AG04449 (cell line): ENCODE measurements at regions of chr9 and their contacts with region 1.

Region 1: DNA sequence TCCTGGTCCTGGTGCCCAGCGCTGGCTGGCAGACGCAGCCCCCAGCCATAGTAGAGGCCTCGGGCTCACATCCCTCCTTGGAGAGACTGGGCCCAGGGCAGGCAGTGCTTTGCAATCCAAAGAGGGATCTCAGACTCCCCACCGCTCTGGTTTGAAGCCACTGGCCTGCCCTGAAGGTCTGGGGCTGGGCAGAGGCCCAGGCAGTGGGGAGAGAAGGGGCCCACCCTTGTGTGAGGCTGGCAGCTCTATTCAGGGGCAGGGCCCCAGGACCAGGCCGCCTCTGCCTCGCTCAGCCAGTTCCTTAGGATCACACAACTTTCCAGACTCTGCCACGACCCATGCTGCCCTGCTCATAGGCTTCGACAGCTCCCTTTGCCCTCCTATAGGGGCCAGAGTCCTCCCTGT is 10.7 kb upstream of the SEC16A start:
- DNase-seq: no peak
- H3K4me3 ChIP-seq: no peak overlapping the region
- CTCF ChIP-seq: no peak

Region 2: DNA sequence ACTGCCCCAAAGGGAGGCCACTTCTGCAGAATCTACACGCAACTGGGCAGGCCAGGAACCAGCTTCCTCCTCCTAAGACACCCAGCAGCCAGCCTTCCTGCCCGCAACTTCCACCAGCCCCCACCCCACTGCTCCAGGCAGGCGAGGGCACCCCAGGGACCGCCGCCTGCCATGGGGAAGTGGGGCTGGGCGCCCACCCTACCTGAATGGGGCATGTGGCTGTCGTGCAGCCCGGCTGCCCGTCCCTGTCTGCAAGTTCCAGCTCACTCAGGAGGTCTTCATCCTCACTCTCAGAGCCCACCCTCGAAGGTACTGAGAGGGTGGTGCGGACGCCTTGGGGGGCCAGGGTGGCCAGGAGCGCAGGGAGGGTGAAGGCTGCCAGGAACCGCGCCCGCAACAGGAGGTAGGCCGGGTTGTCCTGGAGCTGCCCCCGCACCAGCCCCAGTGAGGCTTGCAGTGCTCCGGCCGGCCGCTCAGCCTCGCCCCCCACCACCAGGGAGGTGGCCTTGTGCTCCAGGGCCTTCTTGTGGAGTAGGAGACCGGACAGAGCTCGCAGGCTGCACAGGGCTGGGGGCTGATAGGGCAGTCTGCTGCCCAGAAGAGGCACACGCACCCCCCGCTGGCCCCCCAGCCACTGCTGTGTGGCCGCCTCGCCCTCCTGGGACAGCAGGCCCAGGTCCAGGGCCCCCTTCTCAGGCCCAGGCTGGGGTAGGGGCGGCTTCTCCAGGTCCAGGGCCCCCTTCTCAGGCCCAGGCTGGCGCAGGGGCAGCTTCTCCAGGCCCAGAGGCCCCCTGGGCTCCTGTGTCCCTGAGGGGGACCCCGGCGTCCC is 116.0 kb before region 1 on chr9:
- CTCF ChIA-PET with region 1: no interaction called
- POLR2A ChIA-PET with region 1: no interaction called
- DNase-seq: no peak
- H3K4me3 ChIP-seq: no peak overlapping the region
- CTCF ChIP-seq: no peak

Region 3: DNA sequence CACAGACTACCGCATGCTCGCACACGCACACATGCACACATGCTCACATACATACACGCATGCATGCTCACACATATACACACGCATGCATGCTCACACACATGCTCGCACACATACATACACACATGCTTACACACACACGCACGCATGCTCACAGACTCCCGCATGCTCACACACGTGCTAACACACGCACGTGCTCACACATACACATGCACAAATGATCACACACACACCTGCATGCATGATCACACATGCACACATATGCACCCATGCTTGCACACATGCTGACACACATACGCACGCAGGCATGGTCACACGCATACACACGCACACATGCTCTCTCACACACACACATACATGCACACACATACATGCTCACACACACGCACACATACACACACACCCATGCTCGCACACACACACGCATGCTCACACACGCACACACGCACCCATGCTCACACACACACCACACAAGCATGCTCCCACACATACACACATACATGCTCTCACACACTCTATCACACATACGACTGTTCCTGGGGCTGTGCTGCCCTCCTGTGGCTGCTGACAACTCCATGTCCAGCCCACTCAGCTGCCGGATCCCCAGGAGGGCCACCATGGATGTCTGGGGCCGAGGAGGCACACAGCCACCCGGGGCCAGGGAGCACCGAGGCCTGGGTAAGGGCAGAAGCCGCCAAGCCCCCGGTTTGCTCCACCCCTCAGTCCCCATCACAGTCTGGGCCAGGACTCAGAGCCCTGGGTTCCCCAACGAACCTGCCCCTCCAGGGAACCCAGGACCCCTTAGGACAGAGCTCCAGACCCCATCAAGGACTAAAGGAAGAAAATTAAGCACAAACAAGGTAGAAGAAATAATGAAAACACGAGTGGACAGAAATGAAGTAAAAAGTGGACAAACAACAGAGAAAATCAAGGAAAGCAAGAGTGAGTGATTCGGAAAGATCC is 137.8 kb after region 1 on chr9:
- CTCF ChIA-PET with region 1: interaction called, 674 read pairs
- POLR2A ChIA-PET with region 1: no interaction called
- DNase-seq: no peak
- H3K4me3 ChIP-seq: no peak overlapping the region
- CTCF ChIP-seq: peak; percentile 93